ENCODE measurements at regions of chr3 and their contacts with region 1.

Region 1: DNA sequence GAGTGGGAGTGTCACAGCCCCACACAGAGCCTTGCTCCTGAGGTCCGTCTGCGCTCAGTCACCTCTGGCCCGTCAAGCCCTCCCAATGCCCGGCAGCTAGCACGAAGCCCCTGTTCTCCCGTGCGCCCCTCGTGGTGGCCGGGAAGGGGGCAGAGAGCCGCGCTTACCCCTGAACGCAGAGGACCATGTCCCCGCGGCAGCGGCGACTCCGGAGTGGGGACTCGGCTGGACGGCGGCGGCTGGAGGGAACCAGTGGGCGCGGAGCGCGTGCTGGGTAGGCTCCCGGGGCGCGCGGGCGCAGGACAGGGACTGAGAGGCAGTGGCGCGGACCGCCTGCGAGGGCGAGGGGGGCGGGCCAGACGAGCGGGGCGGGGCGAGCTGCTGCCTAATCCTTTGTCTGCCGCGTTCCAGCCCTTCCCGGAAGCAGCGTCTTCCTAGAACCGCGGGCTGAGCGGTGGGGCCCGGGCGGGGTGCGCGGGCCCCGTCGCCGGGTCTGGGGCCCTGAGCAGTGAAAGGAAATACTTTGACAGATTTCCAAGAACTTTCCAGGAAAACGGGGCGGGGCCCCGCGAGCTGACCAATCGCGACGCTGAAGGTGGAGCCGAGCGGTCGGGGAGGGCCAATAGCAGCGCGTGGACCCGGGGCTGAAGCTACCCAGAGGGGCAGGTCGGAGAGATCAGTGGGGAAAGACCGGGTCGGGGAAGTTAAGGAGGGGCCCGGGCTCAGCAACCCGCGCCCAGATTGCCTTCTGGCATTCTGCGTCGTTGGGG is at the start of gene CISH:
- DNase-seq: peak; percentile 92
- CTCF ChIP-seq: peak; percentile 38

Region 2: GRCh38 chr3:50542177-50543034 is 69.2 kb before region 1 on chr3:
- CTCF ChIA-PET with region 1: interaction called, 14 read pairs
- POLR2A ChIA-PET with region 1: no interaction called
- DNase-seq: peak; percentile 85
- CTCF ChIP-seq: peak; percentile 82

Region 3: GRCh38 chr3:50587806-50588758 is 23.6 kb before region 1 on chr3:
- CTCF ChIA-PET with region 1: interaction called, 419 read pairs
- POLR2A ChIA-PET with region 1: interaction called, 4 read pairs
- DNase-seq: peak; percentile 69
- CTCF ChIP-seq: no peak

Region 4: GRCh38 chr3:50627407-50628051 is 15.9 kb after region 1 on chr3:
- CTCF ChIA-PET with region 1: interaction called, 202 read pairs
- POLR2A ChIA-PET with region 1: no interaction called
- DNase-seq: peak; percentile 46
- CTCF ChIP-seq: peak; percentile 59

Region 5: GRCh38 chr3:50652709-50653108 is 41.1 kb after region 1 on chr3:
- CTCF ChIA-PET with region 1: interaction called, 240 read pairs
- POLR2A ChIA-PET with region 1: no interaction called
- DNase-seq: peak; percentile 66
- CTCF ChIP-seq: peak; percentile 64

Region 6: DNA sequence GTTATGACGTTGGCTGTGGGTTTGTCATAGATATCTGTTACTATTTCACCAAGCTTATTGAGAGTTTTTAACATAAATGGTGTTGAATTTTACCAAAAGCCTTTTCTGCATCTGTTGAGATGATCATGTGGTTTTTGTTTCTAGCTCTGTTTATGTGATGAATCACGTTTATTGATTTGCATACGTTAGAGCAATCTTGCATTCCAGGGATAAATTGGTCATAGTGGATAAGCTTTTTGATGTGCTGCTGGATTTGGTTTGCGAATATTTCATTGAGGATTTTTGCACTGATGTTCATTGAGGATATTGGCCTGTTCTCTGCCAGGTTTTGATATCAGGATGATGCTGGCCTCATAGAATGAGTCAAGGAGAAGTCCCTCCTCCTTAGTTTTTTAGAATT is 180.9 kb after region 1 on chr3:
- CTCF ChIA-PET with region 1: no interaction called
- POLR2A ChIA-PET with region 1: no interaction called
- DNase-seq: no peak
- CTCF ChIP-seq: no peak

Region 7: DNA sequence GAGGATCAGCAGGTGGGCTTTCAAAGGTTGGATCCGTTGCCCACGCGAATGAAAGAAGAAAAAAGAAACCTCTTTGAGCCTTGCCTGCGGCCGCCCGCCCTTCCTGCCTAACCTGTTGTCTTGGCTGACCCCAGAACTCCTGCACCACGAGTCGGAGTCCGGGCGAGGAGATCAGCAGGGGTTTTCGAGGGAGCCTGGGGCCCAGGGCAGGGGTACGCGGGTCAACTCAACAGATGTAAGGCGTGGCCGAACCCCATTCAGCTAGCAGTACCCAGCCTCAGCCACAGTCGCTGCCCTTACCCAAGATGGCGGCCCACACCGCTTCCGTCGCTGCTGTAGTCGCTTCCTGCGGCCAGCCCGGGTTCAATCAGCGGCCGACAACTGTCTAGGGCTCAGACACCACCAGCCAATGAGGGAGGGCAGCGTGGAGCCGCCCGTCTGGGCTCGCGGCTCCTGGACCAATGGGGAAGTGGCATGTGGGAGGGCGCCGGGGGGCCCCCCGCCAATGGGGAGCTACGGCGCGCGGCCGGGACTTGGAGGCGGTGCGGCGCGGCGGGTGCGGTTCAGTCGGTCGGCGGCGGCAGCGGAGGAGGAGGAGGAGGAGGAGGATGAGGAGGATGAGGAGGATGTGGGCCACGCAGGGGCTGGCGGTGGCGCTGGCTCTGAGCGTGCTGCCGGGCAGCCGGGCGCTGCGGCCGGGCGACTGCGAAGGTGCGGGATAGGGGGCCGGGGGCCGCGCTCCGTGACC is 773.3 kb after region 1 on chr3 and contains the start of gene MANF:
- CTCF ChIA-PET with region 1: interaction called, 30 read pairs
- POLR2A ChIA-PET with region 1: interaction called, 3 read pairs
- DNase-seq: peak; percentile 100
- CTCF ChIP-seq: no peak